AG04450 (cell line): ENCODE measurements at regions of chr18 and their contacts with region 1.

Region 1: DNA sequence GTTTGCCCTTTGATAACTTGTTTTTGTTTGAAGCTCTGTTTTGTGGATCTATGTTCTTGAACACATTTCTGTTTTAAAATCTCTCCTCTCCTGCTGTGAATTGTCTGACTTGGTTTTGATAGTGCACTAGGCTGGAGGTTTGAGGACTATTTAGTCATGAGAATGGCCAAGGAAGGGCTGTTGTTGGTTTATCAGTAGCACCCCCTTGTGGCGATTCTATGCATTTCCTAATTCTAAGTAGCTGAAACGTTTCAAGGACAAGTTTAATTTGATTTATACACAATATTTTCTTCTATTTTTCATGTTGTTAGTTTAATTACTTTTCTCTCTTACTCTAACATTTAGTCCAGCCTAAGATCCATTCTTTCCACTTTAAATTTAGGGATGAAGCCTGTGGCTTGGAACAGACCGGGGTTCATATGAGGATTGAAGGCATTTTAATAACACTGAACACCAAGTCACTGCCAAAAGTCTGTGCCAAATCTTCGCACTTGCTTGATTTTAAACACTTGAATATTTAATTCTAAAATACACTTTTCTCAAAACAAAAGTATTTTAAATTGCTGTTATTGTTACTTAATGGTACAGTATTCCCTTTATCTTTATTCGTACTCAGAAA is 166.0 kb downstream of the SOCS6 start:
- DNase-seq: peak; percentile 53
- H3K4me3 ChIP-seq: no peak overlapping the region
- H3K27ac ChIP-seq: no peak overlapping the region
- H3K27me3 ChIP-seq: peaks cover 3% of the 10 kb centered on the region
- CTCF ChIP-seq: peak; percentile 84

Region 2: DNA sequence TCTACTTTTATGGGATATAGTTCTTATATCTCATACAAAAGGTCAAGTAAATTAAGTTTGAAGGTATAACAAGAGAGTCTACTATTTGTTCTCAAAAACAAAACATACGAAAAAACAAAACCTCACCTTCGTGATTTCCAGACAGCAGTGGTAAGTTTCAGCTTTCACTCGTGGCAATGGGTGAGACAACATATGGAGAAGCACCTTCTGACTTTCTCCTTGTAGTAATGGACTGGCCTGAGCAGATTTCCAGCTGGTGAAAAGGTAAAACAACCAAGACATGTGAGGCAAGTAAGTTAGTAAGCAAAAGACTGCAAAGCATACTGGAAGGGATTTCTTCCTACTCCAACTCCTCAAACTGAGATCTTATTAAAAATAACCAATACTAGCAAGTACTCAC is 288.9 kb before region 1 on chr18:
- CTCF ChIA-PET with region 1: interaction called, 154 read pairs
- POLR2A ChIA-PET with region 1: no interaction called
- DNase-seq: no peak
- H3K4me3 ChIP-seq: no peak overlapping the region
- H3K27ac ChIP-seq: no peak overlapping the region
- H3K27me3 ChIP-seq: no peaks in the 10 kb centered on the region
- CTCF ChIP-seq: no peak

Region 3: DNA sequence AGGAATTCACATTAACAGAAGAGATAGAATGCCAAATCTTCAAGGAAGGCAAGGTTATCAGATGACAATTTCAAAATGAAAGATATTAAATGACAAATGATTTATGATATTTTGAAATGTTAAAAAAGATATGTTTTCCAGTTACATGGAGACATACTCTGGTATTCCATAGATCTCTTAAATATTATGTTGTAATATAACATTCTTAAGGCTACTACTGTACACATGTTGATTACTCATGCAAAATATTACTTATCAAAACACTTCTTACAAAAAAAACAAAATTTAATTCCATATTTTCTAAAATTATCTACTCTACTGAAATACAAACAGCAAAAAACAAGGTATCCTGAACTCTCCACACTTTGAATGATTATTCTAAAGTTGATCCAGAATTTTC is 272.3 kb before region 1 on chr18:
- CTCF ChIA-PET with region 1: interaction called, 26 read pairs
- POLR2A ChIA-PET with region 1: no interaction called
- DNase-seq: no peak
- H3K4me3 ChIP-seq: no peak overlapping the region
- H3K27ac ChIP-seq: no peak overlapping the region
- H3K27me3 ChIP-seq: no peaks in the 10 kb centered on the region
- CTCF ChIP-seq: no peak

Region 4: GRCh38 chr18:70195852-70196434 is 258.9 kb before region 1 on chr18:
- CTCF ChIA-PET with region 1: interaction called, 296 read pairs
- POLR2A ChIA-PET with region 1: no interaction called
- DNase-seq: no peak
- H3K4me3 ChIP-seq: no peak overlapping the region
- H3K27ac ChIP-seq: no peak overlapping the region
- H3K27me3 ChIP-seq: no peaks in the 10 kb centered on the region
- CTCF ChIP-seq: peak; percentile 86

Region 5: GRCh38 chr18:70491734-70492348 is 37.0 kb after region 1 on chr18:
- CTCF ChIA-PET with region 1: interaction called, 12 read pairs
- POLR2A ChIA-PET with region 1: no interaction called
- DNase-seq: no peak
- H3K4me3 ChIP-seq: no peak overlapping the region
- H3K27ac ChIP-seq: no peak overlapping the region
- H3K27me3 ChIP-seq: no peaks in the 10 kb centered on the region
- CTCF ChIP-seq: peak; percentile 82

Region 6: DNA sequence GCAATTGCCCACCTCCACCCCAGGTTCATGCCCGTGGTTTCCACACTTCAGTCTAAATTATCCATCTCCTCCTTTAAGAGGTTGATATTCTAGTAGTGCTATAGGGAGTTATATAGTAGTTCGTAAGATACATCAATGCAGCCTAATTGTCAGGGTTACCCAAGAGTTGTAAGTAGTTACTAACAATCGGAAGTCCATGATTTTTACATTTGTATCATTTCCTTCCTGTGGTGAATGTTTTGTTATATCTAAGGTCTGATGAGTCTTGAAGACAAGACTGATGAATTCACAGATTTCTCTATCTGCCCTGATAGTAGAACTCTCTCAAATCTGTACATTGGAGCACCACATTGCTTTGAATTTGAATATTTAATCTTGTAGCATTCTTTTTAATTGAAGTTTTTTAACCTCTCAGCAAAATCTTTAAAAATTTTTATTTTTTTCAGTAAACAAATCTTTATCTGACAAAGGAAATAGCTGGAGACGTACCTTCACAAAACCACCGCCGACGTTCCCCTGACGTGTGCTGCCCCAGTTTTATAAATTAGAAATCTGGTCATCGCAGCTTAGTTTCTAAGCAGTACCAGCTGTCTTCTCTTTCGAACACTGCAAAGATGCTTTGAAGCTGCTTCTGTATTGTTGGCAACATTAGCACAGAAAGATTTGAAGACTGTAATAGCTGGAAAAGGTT is 98.6 kb after region 1 on chr18:
- CTCF ChIA-PET with region 1: no interaction called
- POLR2A ChIA-PET with region 1: no interaction called
- DNase-seq: no peak
- H3K4me3 ChIP-seq: no peak overlapping the region
- H3K27ac ChIP-seq: no peak overlapping the region
- H3K27me3 ChIP-seq: no peaks in the 10 kb centered on the region
- CTCF ChIP-seq: no peak

Region 7: DNA sequence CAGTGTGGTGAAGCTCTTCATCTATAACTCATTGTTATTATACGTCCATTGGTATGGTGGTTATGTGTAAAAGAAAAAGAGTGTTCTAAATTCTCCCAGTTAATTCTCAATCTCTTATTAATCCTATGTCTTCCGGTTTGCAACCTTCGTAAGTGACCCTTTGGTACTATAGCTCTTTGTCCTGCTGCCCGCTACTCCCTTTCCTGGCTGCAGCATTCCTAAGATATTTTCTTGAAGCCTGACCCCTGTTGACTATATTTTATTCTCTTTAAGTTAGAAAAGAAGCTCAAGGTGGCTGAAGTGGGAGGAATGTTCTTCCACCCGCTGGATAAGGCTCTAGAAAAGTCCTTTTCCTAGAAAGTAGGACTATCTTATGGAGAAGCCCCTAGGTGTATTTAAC is 518.8 kb after region 1 on chr18:
- CTCF ChIA-PET with region 1: no interaction called
- POLR2A ChIA-PET with region 1: no interaction called
- DNase-seq: no peak
- H3K4me3 ChIP-seq: no peak overlapping the region
- H3K27ac ChIP-seq: no peak overlapping the region
- H3K27me3 ChIP-seq: no peaks in the 10 kb centered on the region
- CTCF ChIP-seq: no peak